ENCODE measurements at regions of chr11 and their contacts with region 1.

Region 1: GRCh38 chr11:5808500-5809121 is at the start of gene OR52N2:
- DNase-seq: peak; percentile 76
- ATAC-seq: peak; percentile 98
- H3K4me3 ChIP-seq: peak within 1 kb of the TSS; percentile 42 to 69
- H3K27ac ChIP-seq: no peak within 1 kb of the TSS
- H3K4me1 ChIP-seq: peaks cover 7% of the 10 kb centered on the region
- H3K27me3 ChIP-seq: peaks cover 11% of the 10 kb centered on the region; the same call in 1 of the 2 replicates
- CTCF ChIP-seq: peak; percentile 94
- total RNA-seq, gene OR52N2: not detected

Region 2: DNA sequence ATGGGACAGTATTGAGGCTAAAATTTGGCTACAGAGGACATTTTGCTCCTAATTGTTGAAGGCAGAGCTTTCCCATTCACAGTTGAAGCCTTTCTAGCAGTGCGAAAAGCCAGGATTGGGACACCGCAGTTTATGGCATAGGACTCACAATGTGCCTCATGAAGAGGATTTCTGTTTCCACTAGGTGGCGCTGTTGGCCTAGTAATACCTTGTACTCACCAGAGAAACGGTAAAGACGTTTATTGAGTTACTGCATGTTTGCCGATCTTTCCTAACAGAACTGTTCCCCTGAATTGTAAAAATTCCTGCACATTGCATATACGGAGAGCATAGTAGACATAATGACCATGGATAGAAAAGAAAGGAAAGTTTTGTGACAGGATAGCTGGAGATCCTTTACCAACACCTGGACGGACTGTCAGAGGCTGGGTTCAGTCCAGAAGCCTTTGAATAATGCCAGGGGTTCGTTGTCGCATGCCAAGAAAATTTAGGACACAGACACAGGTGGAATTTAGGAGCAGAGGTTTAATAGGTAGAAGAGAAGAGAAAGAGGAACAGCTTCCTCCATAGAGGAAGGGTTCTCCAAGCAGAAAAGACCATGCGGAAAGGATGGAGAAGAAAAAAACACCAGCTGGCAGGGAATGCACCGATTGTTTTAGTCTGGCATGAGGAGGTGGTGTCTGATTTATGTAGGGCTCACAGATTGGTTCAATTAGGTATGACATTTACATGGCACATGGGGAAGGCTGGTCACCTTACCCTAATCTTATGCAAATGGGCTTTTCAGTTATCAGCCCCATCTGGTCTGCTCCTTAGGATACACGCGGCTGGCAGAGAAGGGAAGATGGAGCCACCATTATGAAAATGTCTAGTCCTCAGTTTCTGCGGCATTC is 1182.2 kb before region 1 on chr11:
- CTCF ChIA-PET with region 1: no interaction called
- POLR2A ChIA-PET with region 1: no interaction called
- in situ Hi-C with region 1: no loop called
- intact Hi-C with region 1: loop called (anchors 5 kb)
- DNase-seq: peak; percentile 60
- ATAC-seq: peak; percentile 99
- H3K4me3 ChIP-seq: no peak overlapping the region
- H3K27ac ChIP-seq: no peak overlapping the region
- H3K4me1 ChIP-seq: no peaks in the 10 kb centered on the region
- H3K27me3 ChIP-seq: peaks cover 3% of the 10 kb centered on the region; the same call in 1 of the 2 replicates
- CTCF ChIP-seq: peak; percentile 88

Region 3: GRCh38 chr11:5123802-5124521 is 684.6 kb before region 1 on chr11:
- CTCF ChIA-PET with region 1: no interaction called
- POLR2A ChIA-PET with region 1: no interaction called
- in situ Hi-C with region 1: no loop called
- intact Hi-C with region 1: loop called (anchors 5 kb)
- DNase-seq: peak; percentile 66
- ATAC-seq: peak; percentile 95
- H3K4me3 ChIP-seq: no peak overlapping the region
- H3K27ac ChIP-seq: no peak overlapping the region
- H3K4me1 ChIP-seq: no peaks in the 10 kb centered on the region
- H3K27me3 ChIP-seq: no peaks in the 10 kb centered on the region
- CTCF ChIP-seq: peak; percentile 94

Region 4: DNA sequence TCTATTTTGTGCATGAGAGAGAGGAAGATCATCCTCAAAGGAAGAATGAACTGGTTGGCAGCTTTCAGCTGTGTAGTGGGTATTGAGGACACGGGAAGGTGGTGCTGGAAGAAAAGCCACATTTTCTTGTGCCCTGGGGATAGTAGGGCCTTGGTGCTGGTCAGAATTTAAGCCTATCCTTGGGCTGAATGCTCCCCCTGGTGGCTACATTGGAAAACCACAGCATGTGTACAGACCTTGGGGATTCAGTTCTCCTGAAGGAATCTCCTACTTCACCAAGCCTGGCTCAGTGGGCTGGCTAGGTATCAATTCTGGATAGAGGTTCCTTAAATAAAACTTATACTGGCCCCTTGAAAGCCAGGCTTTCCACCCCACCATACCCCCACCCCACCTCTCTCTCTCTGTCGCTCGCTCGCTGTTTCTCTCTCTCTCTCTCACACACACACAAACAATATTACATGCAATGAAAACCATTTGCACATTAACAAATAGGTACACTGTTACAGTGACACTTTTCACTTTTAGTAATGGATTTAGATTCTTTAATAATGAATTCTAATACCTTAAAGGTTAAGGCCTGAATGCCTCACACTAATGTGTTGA is 427.8 kb before region 1 on chr11:
- CTCF ChIA-PET with region 1: no interaction called
- POLR2A ChIA-PET with region 1: no interaction called
- in situ Hi-C with region 1: no loop called
- intact Hi-C with region 1: loop called (anchors 5 kb)
- DNase-seq: peak; percentile 45
- ATAC-seq: peak; percentile 99
- H3K4me3 ChIP-seq: no peak overlapping the region
- H3K27ac ChIP-seq: no peak overlapping the region
- H3K4me1 ChIP-seq: no peaks in the 10 kb centered on the region
- H3K27me3 ChIP-seq: no peaks in the 10 kb centered on the region
- CTCF ChIP-seq: peak; percentile 88

Region 5: GRCh38 chr11:5476184-5476819 is 332.3 kb before region 1 on chr11:
- CTCF ChIA-PET with region 1: no interaction called
- POLR2A ChIA-PET with region 1: no interaction called
- in situ Hi-C with region 1: no loop called
- intact Hi-C with region 1: loop called (anchors 2 kb)
- DNase-seq: peak; percentile 39
- ATAC-seq: peak; percentile 88
- H3K4me3 ChIP-seq: no peak overlapping the region
- H3K27ac ChIP-seq: no peak overlapping the region
- H3K4me1 ChIP-seq: no peaks in the 10 kb centered on the region
- H3K27me3 ChIP-seq: peaks cover 13% of the 10 kb centered on the region
- CTCF ChIP-seq: peak; percentile 89

Region 6: GRCh38 chr11:5522308-5522707 is 286.3 kb before region 1 on chr11:
- CTCF ChIA-PET with region 1: no interaction called
- POLR2A ChIA-PET with region 1: no interaction called
- in situ Hi-C with region 1: no loop called
- intact Hi-C with region 1: no loop called
- DNase-seq: no peak
- ATAC-seq: no peak
- H3K4me3 ChIP-seq: no peak overlapping the region
- H3K27ac ChIP-seq: no peak overlapping the region
- H3K4me1 ChIP-seq: no peaks in the 10 kb centered on the region
- H3K27me3 ChIP-seq: peaks cover 5% of the 10 kb centered on the region; the same call in 1 of the 2 replicates
- CTCF ChIP-seq: no peak

Region 7: GRCh38 chr11:5600374-5600851 is 208.2 kb before region 1 on chr11:
- CTCF ChIA-PET with region 1: no interaction called
- POLR2A ChIA-PET with region 1: no interaction called
- in situ Hi-C with region 1: no loop called
- intact Hi-C with region 1: loop called (anchors 2 kb)
- DNase-seq: peak; percentile 82
- ATAC-seq: peak; percentile 86
- H3K4me3 ChIP-seq: peak overlapping the region; percentile 23 to 24
- H3K27ac ChIP-seq: peak overlapping the region; percentile 86
- H3K4me1 ChIP-seq: peaks cover 38% of the 10 kb centered on the region
- H3K27me3 ChIP-seq: no peaks in the 10 kb centered on the region
- CTCF ChIP-seq: peak; percentile 98